ENCODE measurements at regions of chr1 and their contacts with region 1.

Region 1: GRCh38 chr1:47367651-47368050 is 34.1 kb downstream of the CMPK1 start:
- DNase-seq: no peak
- H3K4me3 ChIP-seq: no peak overlapping the region
- H3K27ac ChIP-seq: no peak overlapping the region
- H3K4me1 ChIP-seq: no peaks in the 10 kb centered on the region
- H3K27me3 ChIP-seq: no peaks in the 10 kb centered on the region
- CTCF ChIP-seq: no peak
- POLR2A ChIP-seq: no peak

Region 2: GRCh38 chr1:47317841-47318240 is 49.8 kb before region 1 on chr1:
- intact Hi-C with region 1: loop called (anchors 2 kb)
- DNase-seq: no peak
- H3K4me3 ChIP-seq: no peak overlapping the region
- H3K27ac ChIP-seq: no peak overlapping the region
- H3K4me1 ChIP-seq: peaks cover 0 to 4% of the 10 kb centered on the region in 2 donors
- H3K27me3 ChIP-seq: no peaks in the 10 kb centered on the region
- CTCF ChIP-seq: no peak
- POLR2A ChIP-seq: no peak